ENCODE measurements at regions of chr20 and their contacts with region 1.

Region 1: DNA sequence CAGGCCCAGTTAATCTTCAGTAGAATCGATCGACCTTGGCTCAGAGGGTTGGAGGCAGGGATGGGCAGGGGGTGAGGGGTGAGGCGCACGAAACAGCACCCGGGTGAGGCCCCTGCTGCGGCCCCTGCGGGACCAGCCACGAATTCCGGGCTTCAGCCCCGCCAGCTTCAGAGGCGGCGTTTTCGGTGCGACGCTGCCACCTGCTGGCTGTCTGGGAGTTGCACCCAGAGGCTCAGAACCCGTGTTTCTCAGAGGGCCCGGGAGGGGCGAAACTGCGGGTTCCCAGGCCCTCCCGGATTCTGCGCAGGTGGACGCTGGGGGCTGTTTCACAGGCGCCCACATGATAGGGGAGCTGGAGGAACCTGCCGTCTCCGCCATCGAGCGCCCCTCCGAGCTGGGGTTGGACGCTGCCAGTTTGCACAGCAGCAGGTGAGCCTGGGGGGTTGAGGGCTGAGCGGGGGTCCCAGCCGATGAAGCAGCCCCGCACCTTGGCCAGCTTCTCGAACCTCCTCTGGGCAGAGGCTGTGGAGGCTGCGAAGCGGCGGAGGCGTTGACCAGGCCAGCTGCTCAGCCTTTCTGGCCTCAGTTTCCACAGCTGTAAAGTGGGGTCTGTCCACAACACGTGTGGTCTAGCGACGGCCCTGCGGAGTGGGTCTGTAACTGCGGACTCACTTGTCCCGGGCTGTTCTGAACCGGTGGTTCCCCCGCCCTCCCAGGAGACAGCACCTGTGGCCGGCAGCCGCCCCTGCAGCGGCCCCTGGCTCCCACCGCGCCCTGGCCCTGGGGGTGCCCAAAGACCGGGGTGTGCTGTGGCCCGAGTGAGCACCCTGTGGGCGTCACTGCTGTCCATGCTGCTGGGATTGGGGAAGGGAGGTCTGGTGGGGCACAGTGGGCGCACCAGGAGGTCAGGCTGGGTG is 2.5 kb upstream of the BHLHE23 start:
- DNase-seq: peak; percentile 67 to 92 (median 82)
- ATAC-seq: peak; percentile 73
- H3K4me3 ChIP-seq: peak overlapping the region; percentile 41
- H3K4me3 Mint-ChIP-seq: peak overlapping the region; percentile 88
- H3K27ac ChIP-seq: no peak overlapping the region
- H3K27ac Mint-ChIP-seq: no peak overlapping the region
- H3K4me1 ChIP-seq: peaks cover 63% of the 10 kb centered on the region
- H3K4me1 Mint-ChIP-seq: peaks cover 24% of the 10 kb centered on the region
- H3K27me3 ChIP-seq: peaks cover 44 to 46% of the 10 kb centered on the region in 2 experiments
- H3K27me3 Mint-ChIP-seq: peaks cover 73% of the 10 kb centered on the region
- CTCF ChIP-seq: peak; percentile 94

Region 2: DNA sequence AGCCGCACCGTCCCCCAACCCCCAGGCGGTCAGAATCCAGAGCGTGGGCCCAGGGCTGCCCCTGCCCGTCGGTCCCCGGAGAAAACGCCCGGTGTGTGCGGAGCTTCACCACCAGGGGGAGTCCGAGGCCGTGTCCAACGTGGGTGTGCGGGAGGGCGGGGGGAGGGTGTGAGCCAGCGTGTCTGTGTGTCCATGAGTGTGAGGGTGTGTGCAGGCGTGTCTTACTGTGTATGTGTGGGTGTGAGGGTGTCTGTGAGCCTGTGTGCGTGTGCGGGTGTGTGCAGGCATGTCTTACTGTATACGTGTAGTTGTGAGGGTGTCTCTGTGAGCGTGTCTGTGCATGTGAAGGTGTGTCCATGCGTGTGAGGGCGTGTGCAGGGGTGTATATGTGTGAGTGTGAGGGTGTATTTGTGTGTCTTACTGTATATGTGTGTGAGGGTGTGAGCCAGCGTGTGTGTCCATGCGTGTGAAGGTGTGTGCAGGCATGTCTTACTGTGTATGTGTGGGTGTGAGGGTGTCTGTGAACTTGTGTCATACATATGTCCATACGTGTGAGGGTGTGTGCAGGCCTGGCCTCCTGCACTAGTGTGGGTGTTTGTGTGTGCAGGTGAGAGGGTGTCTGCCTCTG is 509.0 kb before region 1 on chr20:
- CTCF ChIA-PET with region 1: no interaction called
- POLR2A ChIA-PET with region 1: no interaction called
- intact Hi-C with region 1: loop called in 1 of 2 experiments (anchors 10 kb)
- DNase-seq: peak; percentile 70 to 88 (median 79)
- ATAC-seq: peak; percentile 72
- H3K4me3 ChIP-seq: no peak overlapping the region
- H3K4me3 Mint-ChIP-seq: no peak overlapping the region
- H3K27ac ChIP-seq: no peak overlapping the region
- H3K27ac Mint-ChIP-seq: no peak overlapping the region
- H3K4me1 ChIP-seq: peaks cover 25% of the 10 kb centered on the region
- H3K4me1 Mint-ChIP-seq: peaks cover 12% of the 10 kb centered on the region
- H3K27me3 ChIP-seq: peaks cover 0 to 4% of the 10 kb centered on the region in 2 experiments
- H3K27me3 Mint-ChIP-seq: no peaks in the 10 kb centered on the region
- CTCF ChIP-seq: peak; percentile 71

Region 3: DNA sequence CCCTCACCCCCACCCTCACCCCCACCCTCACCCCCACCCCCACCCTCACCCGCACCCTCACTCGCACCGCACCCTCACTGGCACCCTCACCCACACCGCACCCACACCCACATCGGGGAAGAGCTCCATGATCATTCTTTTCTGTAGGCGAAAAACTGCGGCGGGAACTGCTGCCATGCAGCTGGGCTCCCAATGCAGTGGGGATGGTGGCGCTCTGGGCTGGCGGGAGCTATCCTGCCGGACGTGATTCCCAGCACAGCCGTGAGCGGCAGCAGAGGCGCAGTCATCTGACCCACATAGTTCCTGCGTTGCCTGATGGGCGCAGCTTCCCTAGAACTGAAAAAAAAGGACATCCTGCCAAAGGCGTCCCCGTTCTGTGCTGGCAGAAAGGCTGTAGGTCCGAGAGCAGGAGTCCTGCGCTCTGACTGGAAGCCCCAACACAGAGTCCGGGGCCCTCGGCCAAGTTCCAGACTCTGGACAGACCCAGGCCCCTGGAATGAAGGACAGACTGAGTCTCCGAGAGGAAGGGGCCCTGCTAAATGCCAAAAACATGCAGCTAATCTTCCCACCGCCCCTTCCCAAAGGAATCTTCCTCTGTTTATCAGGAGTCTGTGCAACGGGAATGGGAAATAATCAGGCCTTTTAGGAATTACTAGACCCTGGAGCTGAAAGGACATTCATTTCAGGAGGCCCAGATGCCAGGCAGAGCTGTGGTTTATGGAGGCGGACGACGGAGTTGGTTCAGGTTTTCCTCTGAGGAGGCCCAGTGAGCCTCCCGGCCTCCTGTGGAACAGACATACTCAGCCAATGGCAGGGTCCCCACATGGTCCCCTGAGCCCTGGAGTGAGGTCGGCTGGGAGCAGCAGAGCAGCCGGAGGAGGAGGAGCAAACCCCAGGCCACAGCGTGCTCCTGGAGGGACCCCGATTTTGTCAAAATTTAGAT is 133.6 kb before region 1 on chr20:
- CTCF ChIA-PET with region 1: interaction called, 4 read pairs
- POLR2A ChIA-PET with region 1: no interaction called
- intact Hi-C with region 1: loop called in 1 of 2 experiments (anchors 1 kb)
- DNase-seq: peak in 2 of 14 experiments; percentile 40 to 51
- ATAC-seq: peak; percentile 46
- H3K4me3 ChIP-seq: no peak overlapping the region
- H3K4me3 Mint-ChIP-seq: peak overlapping the region; percentile 34
- H3K27ac ChIP-seq: peak overlapping the region in 1 of 2 donors; percentile 25
- H3K27ac Mint-ChIP-seq: peak overlapping the region; percentile 44
- H3K4me1 ChIP-seq: peaks cover 30% of the 10 kb centered on the region
- H3K4me1 Mint-ChIP-seq: peaks cover 28% of the 10 kb centered on the region
- H3K27me3 ChIP-seq: peaks cover 0 to 5% of the 10 kb centered on the region in 2 experiments
- H3K27me3 Mint-ChIP-seq: no peaks in the 10 kb centered on the region
- CTCF ChIP-seq: no peak

Region 4: GRCh38 chr20:62953839-62954703 is 55.2 kb before region 1 on chr20:
- CTCF ChIA-PET with region 1: interaction called, 7 read pairs
- POLR2A ChIA-PET with region 1: interaction called, 3 read pairs
- intact Hi-C with region 1: loop called in 1 of 2 experiments (anchors 10 kb)
- DNase-seq: peak; percentile 48 to 88 (median 68)
- ATAC-seq: peak; percentile 87
- H3K4me3 ChIP-seq: peak overlapping the region; percentile 46
- H3K4me3 Mint-ChIP-seq: peak overlapping the region; percentile 88
- H3K27ac ChIP-seq: peak overlapping the region; percentile 17 to 78
- H3K27ac Mint-ChIP-seq: peak overlapping the region; percentile 90
- H3K4me1 ChIP-seq: peaks cover 49% of the 10 kb centered on the region
- H3K4me1 Mint-ChIP-seq: peaks cover 31% of the 10 kb centered on the region
- H3K27me3 ChIP-seq: no peaks in the 10 kb centered on the region
- H3K27me3 Mint-ChIP-seq: no peaks in the 10 kb centered on the region
- CTCF ChIP-seq: no peak

Region 5: DNA sequence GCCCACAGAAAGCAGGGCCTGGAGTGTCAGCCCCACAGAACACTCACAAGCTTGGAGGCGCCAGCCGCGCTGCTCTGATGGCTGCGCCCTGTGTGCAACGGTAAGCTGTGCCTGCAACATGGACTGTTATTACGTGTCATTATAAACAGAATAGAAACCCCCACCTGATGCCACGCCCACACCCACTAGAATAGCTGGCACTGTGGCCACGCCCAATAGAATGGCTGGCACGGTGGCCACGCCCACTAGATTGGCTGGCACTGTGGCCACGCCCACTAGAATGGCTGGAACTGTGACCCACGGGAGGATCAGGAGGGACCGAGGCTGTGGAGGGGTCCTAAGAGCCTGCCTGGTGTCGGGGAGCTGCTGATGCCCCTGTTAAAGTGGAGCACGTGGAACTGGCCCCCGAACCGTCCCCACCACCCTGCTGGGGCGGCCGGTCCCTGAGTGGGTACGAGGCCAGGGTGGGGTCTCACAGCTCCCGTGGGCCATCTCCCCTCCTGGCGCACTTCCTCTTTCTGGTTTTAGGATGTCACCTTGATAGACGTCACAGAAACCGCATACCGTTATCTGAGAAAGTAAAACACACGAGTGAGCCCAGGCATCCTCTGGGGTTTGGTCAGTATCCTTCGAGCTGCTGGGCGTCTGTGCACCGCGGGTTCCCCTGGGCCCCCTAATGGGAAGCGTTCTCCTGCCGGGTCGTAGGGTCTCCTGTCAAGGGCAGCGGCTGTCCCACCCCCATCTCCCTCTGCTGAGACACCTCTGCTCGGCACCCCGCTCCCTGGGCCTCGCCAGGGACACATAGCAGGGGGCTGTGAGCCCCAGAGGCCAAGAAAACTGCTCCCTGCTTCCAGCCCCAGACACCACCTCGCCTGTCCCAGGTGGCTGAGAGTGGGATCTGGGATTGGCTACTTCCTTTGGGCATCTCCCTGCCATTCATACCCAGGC is 31.4 kb before region 1 on chr20:
- CTCF ChIA-PET with region 1: interaction called, 24 read pairs
- POLR2A ChIA-PET with region 1: interaction called, 8 read pairs
- intact Hi-C with region 1: no loop called
- DNase-seq: peak; percentile 49 to 93 (median 78)
- ATAC-seq: peak; percentile 83
- H3K4me3 ChIP-seq: peak overlapping the region; percentile 49
- H3K4me3 Mint-ChIP-seq: peak overlapping the region; percentile 83
- H3K27ac ChIP-seq: no peak overlapping the region
- H3K27ac Mint-ChIP-seq: peak overlapping the region; percentile 80
- H3K4me1 ChIP-seq: peaks cover 61% of the 10 kb centered on the region
- H3K4me1 Mint-ChIP-seq: peaks cover 38% of the 10 kb centered on the region
- H3K27me3 ChIP-seq: peaks cover 67 to 74% of the 10 kb centered on the region in 2 experiments
- H3K27me3 Mint-ChIP-seq: peaks cover 74% of the 10 kb centered on the region
- CTCF ChIP-seq: no peak